Ascending aorta (tissue), 2 donors: ENCODE measurements at regions of chr6 and their contacts with region 1.

Region 1: DNA sequence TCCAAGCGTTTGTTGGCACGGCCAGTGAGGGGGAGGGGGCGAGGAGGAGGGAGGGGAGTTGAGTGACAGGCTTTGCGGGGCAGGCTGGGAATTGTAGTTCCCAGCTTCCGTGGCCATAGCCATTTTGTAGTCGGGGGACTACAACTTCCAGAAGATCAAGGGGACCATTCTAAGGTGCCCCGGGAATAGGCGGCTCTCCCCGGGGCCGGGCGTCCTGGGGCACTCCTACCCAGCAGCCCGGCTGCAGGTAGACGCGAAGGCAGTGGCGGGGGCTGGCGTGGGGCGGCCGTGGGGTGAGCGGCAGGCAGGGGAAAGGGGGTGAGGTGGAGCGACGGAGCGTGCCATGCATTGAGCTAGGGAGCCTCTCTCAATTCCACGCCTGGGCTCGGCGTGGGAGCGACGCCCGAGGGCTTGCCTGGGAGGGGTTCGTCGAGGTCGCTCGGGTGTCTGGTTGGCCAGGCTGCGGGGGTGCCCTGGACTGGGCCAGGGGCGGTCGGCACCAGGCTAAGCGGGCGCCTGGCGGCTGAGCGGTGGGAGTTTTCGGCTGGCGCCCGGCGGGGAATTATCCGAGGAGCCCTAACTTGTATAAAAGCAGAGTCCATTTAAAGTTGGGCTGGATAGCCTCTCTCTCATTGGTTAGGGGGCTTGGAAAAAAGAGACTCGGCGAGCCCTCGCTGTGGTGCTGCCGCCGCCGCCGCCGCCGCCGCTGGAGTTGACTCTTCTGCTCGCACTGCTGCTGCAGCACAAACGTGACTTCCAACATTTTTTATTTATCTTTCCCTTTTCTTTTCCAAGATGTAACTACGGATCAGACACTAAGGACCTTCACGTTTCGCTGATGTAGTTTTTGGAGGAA is at the start of gene JARID2:
- DNase-seq: peak; percentile 94 to 99
- H3K4me3 ChIP-seq: peak within 1 kb of the TSS; percentile 95 to 96
- H3K27ac ChIP-seq: peak within 1 kb of the TSS; percentile 92 to 94
- H3K4me1 ChIP-seq: peaks cover 0 to 8% of the 10 kb centered on the region in 2 donors
- H3K27me3 ChIP-seq: no peaks in the 10 kb centered on the region
- CTCF ChIP-seq: no peak
- total RNA-seq, gene JARID2: 5.0 TPM

Region 2: GRCh38 chr6:13814176-13814937 is 1431.2 kb before region 1 on chr6 and contains the start of gene MCUR1:
- intact Hi-C with region 1: loop called (anchors 10 kb)
- DNase-seq: peak; percentile 41 to 93
- H3K4me3 ChIP-seq: peak within 1 kb of the TSS; percentile 84 to 97
- H3K27ac ChIP-seq: peak within 1 kb of the TSS; percentile 95
- H3K4me1 ChIP-seq: peaks cover 5 to 28% of the 10 kb centered on the region in 2 donors
- H3K27me3 ChIP-seq: no peaks in the 10 kb centered on the region
- CTCF ChIP-seq: peak in 1 of 3 experiments; percentile 21
- total RNA-seq, gene MCUR1: 2.8 TPM

Region 3: DNA sequence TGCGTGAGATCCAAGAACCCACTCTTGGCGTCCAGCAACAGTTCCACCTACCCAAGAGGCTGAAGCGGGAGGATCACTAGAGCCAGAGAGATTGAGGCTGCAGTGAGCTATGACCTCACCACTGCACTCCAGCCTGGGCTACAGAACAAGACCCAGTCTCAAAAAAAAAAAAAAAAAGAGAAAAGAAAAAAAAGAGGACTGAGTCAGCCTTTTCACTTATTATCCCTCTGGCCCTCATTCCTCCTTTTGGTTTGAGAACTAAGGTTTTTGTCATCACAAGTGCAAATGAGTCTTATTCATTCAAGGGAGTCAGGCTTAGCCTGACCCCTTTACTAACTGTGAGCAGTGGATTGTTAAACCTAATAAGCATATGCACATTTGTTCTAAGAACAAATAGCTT is 37.7 kb before region 1 on chr6:
- intact Hi-C with region 1: no loop called
- DNase-seq: no peak
- H3K4me3 ChIP-seq: no peak overlapping the region
- H3K27ac ChIP-seq: no peak overlapping the region
- H3K4me1 ChIP-seq: no peaks in the 10 kb centered on the region
- H3K27me3 ChIP-seq: no peaks in the 10 kb centered on the region
- CTCF ChIP-seq: no peak

Region 4: DNA sequence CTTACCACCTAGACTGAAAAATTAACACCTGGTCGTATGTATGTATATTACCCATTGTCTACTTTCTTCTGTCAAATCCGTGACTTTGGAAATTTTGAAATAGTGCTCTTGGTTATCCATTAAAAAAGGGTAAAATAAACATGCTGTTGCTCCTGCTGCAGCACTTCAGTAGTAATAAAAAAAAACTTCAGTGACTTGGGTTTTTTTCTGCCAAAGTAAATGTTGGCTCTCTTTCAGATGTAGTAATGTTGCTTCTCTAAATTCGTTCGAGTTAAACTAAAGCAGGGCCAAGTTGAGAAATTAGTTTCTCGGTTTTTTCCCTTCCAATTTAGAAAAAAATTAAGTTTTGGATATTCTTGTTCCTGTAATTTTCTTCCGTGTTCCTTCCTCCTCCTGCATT is 34.4 kb after region 1 on chr6:
- intact Hi-C with region 1: loop called (anchors 2 kb)
- DNase-seq: no peak
- H3K4me3 ChIP-seq: no peak overlapping the region
- H3K27ac ChIP-seq: no peak overlapping the region
- H3K4me1 ChIP-seq: peaks cover 0 to 5% of the 10 kb centered on the region in 2 donors
- H3K27me3 ChIP-seq: no peaks in the 10 kb centered on the region
- CTCF ChIP-seq: no peak

Region 5: GRCh38 chr6:15429141-15430110 is 183.8 kb after region 1 on chr6:
- intact Hi-C with region 1: no loop called
- DNase-seq: no peak
- H3K4me3 ChIP-seq: no peak overlapping the region
- H3K27ac ChIP-seq: no peak overlapping the region
- H3K4me1 ChIP-seq: peaks cover 0 to 18% of the 10 kb centered on the region in 2 donors
- H3K27me3 ChIP-seq: no peaks in the 10 kb centered on the region
- CTCF ChIP-seq: no peak

Region 6: GRCh38 chr6:15473741-15474161 is 228.2 kb after region 1 on chr6:
- intact Hi-C with region 1: loop called (anchors 10 kb)
- DNase-seq: no peak
- H3K4me3 ChIP-seq: no peak overlapping the region
- H3K27ac ChIP-seq: peak overlapping the region in 1 of 2 donors; percentile 57
- H3K4me1 ChIP-seq: peaks cover 0 to 19% of the 10 kb centered on the region in 2 donors
- H3K27me3 ChIP-seq: no peaks in the 10 kb centered on the region
- CTCF ChIP-seq: no peak

Region 7: DNA sequence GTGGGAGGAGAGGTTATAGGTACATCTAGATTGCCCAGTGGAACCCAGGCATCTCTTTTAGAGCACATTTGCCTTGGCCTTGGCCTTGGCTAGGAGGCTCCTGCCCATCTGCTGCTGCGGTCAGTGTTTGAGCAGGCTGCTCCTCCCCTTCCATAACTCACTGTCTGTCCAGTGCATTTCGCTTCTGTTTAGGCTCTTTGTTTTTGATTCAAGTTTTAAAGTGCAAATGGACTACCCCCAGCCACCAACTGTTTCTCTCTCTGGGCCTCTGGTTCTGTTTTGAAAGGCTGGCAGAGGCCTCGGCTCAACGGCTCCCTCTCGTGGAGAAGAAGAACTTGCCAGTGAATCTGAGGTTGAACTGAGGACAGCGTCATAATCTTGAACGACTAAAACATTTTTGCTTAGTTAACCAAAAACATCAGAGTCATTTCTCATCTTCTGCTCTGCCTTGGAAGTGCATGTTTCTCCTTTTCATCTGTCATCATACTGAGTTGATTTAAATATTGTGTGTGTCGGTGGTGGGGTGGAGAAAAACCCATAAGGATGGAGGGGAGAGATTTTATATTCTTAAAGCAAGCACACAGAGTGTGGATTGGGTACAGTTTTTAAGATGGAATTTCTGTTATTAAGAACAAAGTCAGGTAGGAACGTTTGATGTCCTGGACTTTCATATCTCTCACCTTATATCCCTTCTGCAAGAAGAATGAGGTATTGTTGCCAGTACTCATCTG is 245.8 kb after region 1 on chr6:
- intact Hi-C with region 1: no loop called
- DNase-seq: peak in 1 of 2 donors; percentile 81
- H3K4me3 ChIP-seq: no peak overlapping the region
- H3K27ac ChIP-seq: no peak overlapping the region
- H3K4me1 ChIP-seq: peaks cover 0 to 2% of the 10 kb centered on the region in 2 donors
- H3K27me3 ChIP-seq: no peaks in the 10 kb centered on the region
- CTCF ChIP-seq: peak; percentile 77 to 91 (median 86)

Region 8: GRCh38 chr6:16128759-16129622 is 883.4 kb after region 1 on chr6 and contains the start of gene MYLIP:
- intact Hi-C with region 1: loop called (anchors 5 kb)
- DNase-seq: peak; percentile 92 to 99
- H3K4me3 ChIP-seq: peak within 1 kb of the TSS; percentile 94 to 96
- H3K27ac ChIP-seq: peak within 1 kb of the TSS; percentile 93 to 98
- H3K4me1 ChIP-seq: peaks cover 0 to 24% of the 10 kb centered on the region in 2 donors
- H3K27me3 ChIP-seq: no peaks in the 10 kb centered on the region
- CTCF ChIP-seq: peak; percentile 67 to 83 (median 75)
- total RNA-seq, gene MYLIP: 36.1 TPM

Region 9: GRCh38 chr6:16319813-16320532 is 1074.4 kb after region 1 on chr6:
- intact Hi-C with region 1: loop called (anchors 5 kb)
- DNase-seq: peak; percentile 88 to 94
- H3K4me3 ChIP-seq: peak overlapping the region; percentile 42 to 56
- H3K27ac ChIP-seq: peak overlapping the region; percentile 96
- H3K4me1 ChIP-seq: peaks cover 11 to 63% of the 10 kb centered on the region in 2 donors
- H3K27me3 ChIP-seq: no peaks in the 10 kb centered on the region
- CTCF ChIP-seq: no peak